ENCODE measurements at regions of chr2 and their contacts with region 1.

Region 1: DNA sequence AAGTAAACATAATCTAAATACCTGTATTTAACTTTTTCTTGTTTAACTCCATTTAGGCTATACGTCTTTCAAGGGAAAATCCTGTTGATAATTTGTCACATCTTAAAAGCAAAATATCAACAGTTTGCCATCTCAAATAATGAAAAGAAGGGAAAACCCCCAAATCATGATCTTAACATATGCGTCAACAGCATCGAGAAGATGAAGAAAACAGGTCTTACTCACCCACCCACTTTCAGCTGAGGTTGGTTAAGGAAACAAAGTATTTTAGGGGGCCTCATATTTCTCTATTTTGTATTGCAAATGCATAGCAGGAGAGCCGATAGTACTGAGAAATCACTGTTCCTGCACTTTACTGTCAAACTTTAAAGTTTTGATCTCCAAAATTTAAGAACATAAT is 143.1 kb upstream of the COPS8 start:
- DNase-seq: no peak
- H3K4me3 Mint-ChIP-seq: no peak overlapping the region
- H3K27ac Mint-ChIP-seq: no peak overlapping the region
- H3K4me1 Mint-ChIP-seq: peaks cover 6% of the 10 kb centered on the region
- H3K27me3 Mint-ChIP-seq: peaks cover 2% of the 10 kb centered on the region

Region 2: GRCh38 chr2:236956038-236956618 is 13.6 kb after region 1 on chr2:
- CTCF ChIA-PET with region 1: interaction called, 3 read pairs
- POLR2A ChIA-PET with region 1: interaction called, 4 read pairs
- intact Hi-C with region 1: loop called (anchors 1 kb)
- DNase-seq: peak; percentile 53
- H3K4me3 Mint-ChIP-seq: no peak overlapping the region
- H3K27ac Mint-ChIP-seq: peak overlapping the region; percentile 44
- H3K4me1 Mint-ChIP-seq: peaks cover 14% of the 10 kb centered on the region
- H3K27me3 Mint-ChIP-seq: peaks cover 2% of the 10 kb centered on the region